Keratinocyte (primary cell): ENCODE measurements at regions of chr11 and their contacts with region 1.

Region 1: DNA sequence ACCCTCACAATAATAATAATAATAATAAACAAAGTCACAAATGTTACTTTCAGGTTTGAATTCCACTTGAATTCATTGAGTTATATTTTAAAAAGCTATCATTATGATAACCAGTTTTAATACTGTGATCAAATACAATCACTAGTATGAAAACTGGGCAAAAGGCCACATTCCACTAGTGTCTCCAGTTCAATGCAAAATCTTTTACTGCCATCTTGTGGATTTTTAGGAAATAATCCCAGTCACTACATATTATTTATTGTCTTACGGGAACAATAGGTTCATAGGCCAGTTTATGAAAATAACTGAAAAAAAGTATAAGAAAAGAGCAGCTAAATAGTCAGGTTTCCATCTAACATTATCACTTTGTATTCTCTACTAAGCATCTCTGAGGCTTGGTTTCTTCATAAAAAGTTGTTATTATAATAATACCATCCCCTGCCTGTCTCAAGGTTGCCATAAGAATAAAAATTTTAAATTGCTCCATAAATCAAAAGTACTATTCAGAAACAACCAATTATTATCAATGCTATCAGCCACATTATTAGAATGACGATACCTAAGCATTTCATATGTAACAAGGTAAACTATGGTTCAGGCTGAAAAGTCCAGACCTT is 533.9 kb upstream of the CCDC90B start:
- DNase-seq: no peak
- H3K4me3 ChIP-seq: no peak overlapping the region
- H3K27ac ChIP-seq: no peak overlapping the region
- H3K4me1 ChIP-seq: peaks cover 7% of the 10 kb centered on the region
- H3K27me3 ChIP-seq: no peaks in the 10 kb centered on the region
- CTCF ChIP-seq: peak in 1 of 3 experiments; percentile 35

Region 2: DNA sequence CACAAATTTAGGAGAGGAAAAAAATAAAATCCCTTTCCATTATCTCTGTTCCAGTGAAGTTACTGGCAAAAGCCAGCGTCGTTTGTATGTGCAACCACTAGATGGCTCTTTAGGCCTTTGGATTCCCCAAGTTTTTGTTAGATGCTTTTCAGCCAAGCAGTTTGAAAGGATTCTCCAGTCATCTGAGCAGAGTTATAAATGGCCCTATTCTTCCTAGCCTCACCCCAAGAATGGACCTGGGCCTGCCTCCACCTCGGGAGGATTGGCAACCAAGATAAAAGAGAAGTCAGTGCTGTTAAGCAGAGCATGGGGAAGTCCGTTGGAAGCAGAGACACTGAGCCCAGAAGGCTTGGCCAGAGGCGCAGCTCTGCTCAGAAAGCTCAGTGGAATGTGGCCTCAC is 1101.7 kb before region 1 on chr11:
- dilution Hi-C with region 1: loop called (anchors 25 kb)
- DNase-seq: no peak
- H3K4me3 ChIP-seq: no peak overlapping the region
- H3K27ac ChIP-seq: no peak overlapping the region
- H3K4me1 ChIP-seq: no peaks in the 10 kb centered on the region
- H3K27me3 ChIP-seq: no peaks in the 10 kb centered on the region
- CTCF ChIP-seq: peak; percentile 53 to 83 (median 67)

Region 3: GRCh38 chr11:83760932-83761331 is 59.1 kb before region 1 on chr11:
- dilution Hi-C with region 1: no loop called
- DNase-seq: no peak
- H3K4me3 ChIP-seq: no peak overlapping the region
- H3K27ac ChIP-seq: no peak overlapping the region
- H3K4me1 ChIP-seq: no peaks in the 10 kb centered on the region
- H3K27me3 ChIP-seq: peaks cover 3% of the 10 kb centered on the region
- CTCF ChIP-seq: no peak